ENCODE measurements at regions of chr13 and their contacts with region 1.

Region 1: DNA sequence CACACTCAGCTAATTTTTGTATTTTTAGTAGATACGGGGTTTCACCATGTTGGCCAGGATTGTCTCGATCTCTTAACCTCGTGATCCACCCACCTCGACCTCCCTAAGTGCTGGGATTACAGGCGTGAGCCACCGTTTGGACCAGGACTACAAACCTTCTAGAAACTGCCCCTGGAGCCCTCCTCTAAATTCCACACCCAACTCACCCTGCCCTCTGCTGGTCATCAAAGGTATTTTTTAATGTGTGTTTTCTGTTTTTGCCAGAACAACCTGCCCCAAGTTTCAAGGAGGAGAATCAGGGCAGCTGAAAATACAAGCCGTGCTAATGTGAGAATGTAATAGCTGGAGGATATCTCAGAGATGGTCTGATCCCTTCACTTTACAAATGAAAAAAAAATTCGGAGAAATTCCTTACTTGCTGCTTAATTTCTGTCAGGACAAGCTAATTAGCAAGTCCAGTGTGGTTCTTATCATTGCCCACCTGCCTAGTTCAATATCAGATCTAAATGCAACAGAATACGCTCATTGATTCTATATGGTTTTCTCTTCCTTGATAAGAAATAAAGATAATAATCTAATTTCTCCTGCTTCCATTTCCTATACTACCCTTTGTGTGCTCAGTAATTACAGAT is 4.1 kb downstream of the ATP8A2 start:
- DNase-seq: peak in 1 of 2 donors; percentile 10
- H3K4me3 ChIP-seq: no peak overlapping the region
- H3K27ac ChIP-seq: no peak overlapping the region
- H3K4me1 ChIP-seq: peaks cover 0 to 11% of the 10 kb centered on the region in 2 donors
- H3K27me3 ChIP-seq: peaks cover 11% of the 10 kb centered on the region
- CTCF ChIP-seq: peak; percentile 29 to 70 (median 54)
- POLR2A ChIP-seq: no peak

Region 2: GRCh38 chr13:25232937-25233515 is 142.8 kb before region 1 on chr13:
- intact Hi-C with region 1: loop called (anchors 10 kb)
- DNase-seq: no peak
- H3K4me3 ChIP-seq: no peak overlapping the region
- H3K27ac ChIP-seq: no peak overlapping the region
- H3K4me1 ChIP-seq: no peaks in the 10 kb centered on the region
- H3K27me3 ChIP-seq: no peaks in the 10 kb centered on the region
- CTCF ChIP-seq: peak; percentile 14 to 62 (median 49)
- POLR2A ChIP-seq: no peak

Region 3: GRCh38 chr13:25598421-25598820 is 222.6 kb after region 1 on chr13:
- intact Hi-C with region 1: no loop called
- DNase-seq: no peak
- H3K4me3 ChIP-seq: no peak overlapping the region
- H3K27ac ChIP-seq: no peak overlapping the region
- H3K4me1 ChIP-seq: no peaks in the 10 kb centered on the region
- H3K27me3 ChIP-seq: no peaks in the 10 kb centered on the region
- CTCF ChIP-seq: no peak
- POLR2A ChIP-seq: no peak